ENCODE measurements at regions of chr4 and their contacts with region 1.

Region 1: DNA sequence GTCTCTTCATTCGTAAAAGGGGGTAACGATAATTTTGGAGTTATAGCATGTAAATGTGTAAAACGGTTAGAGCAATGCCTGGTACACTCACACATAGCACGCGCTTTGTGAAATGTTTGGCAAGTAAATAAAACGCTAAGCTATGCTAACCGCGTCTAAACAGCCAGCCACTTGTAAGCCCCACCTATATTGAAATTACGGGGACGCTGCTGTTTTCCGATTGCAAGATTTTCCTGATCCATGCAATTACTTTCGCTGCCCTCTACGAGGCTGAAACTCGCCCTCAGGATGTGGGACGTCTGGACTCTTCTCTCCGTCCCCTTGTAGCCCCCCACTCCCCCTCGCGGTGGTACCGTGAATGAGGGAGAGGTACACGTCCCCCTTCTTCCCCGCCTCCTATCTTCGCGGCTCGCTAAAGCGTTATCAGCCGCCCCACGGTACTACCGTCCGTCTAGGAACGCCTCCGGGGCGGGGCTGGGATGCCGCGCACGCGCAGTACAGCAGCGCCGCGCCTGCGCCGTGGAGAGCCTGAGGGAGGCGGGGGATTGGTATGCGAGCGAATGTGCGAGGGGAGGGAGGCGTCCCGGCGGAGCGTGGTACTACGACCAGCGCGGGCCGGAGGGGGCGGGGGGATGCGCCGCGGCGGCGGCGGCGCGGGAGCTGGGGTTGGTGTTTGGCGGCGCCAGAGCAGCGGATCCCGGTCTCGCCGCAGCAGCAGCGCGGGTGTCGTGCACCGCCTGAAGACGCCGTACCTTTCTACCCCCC is at the start of gene STIM2:
- DNase-seq: peak; percentile 99
- H3K4me3 Mint-ChIP-seq: peak within 1 kb of the TSS; percentile 87
- H3K27ac Mint-ChIP-seq: peak within 1 kb of the TSS; percentile 96
- H3K4me1 Mint-ChIP-seq: peaks cover 55% of the 10 kb centered on the region
- H3K27me3 Mint-ChIP-seq: no peaks in the 10 kb centered on the region
- total RNA-seq, gene STIM2: 53.3 to 58.7 TPM

Region 2: GRCh38 chr4:26873391-26874026 is 13.2 kb after region 1 on chr4:
- CTCF ChIA-PET with region 1: interaction called, 4 read pairs
- POLR2A ChIA-PET with region 1: interaction called, 70 read pairs
- DNase-seq: peak; percentile 75
- H3K4me3 Mint-ChIP-seq: peak overlapping the region; percentile 52
- H3K27ac Mint-ChIP-seq: peak overlapping the region; percentile 73
- H3K4me1 Mint-ChIP-seq: peaks cover 67% of the 10 kb centered on the region
- H3K27me3 Mint-ChIP-seq: no peaks in the 10 kb centered on the region

Region 3: DNA sequence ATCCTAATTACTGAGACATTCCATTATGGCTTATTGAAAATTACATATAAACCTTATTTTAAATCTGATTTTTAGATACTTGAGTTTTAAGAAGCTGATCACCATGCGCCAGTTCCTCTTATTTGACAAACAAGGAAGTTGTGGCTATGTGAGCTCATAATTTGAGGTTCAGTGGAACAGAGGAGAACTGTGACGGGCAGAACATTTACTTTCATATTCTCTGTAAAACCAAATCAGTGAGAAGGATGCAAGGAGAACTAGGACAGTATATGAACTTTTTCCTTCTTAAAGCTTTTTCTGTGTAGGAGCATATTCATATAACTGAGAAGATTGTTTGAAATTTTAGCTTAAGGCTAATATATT is 25.6 kb after region 1 on chr4:
- CTCF ChIA-PET with region 1: interaction called, 57 read pairs
- POLR2A ChIA-PET with region 1: interaction called, 259 read pairs
- DNase-seq: peak; percentile 42
- H3K4me3 Mint-ChIP-seq: peak overlapping the region; percentile 72
- H3K27ac Mint-ChIP-seq: peak overlapping the region; percentile 95
- H3K4me1 Mint-ChIP-seq: peaks cover 70% of the 10 kb centered on the region
- H3K27me3 Mint-ChIP-seq: no peaks in the 10 kb centered on the region

Region 4: GRCh38 chr4:27003642-27004113 is 143.3 kb after region 1 on chr4:
- CTCF ChIA-PET with region 1: interaction called, 12 read pairs
- POLR2A ChIA-PET with region 1: interaction called, 21 read pairs
- DNase-seq: peak; percentile 27
- H3K4me3 Mint-ChIP-seq: no peak overlapping the region
- H3K27ac Mint-ChIP-seq: peak overlapping the region; percentile 51
- H3K4me1 Mint-ChIP-seq: peaks cover 30% of the 10 kb centered on the region
- H3K27me3 Mint-ChIP-seq: no peaks in the 10 kb centered on the region